ENCODE measurements at regions of chr3 and their contacts with region 1.

Region 1: GRCh38 chr3:27449530-27450150 is 34.5 kb downstream of the SLC4A7 start:
- DNase-seq: no peak

Region 2: GRCh38 chr3:27357665-27358258 is 91.9 kb before region 1 on chr3:
- intact Hi-C with region 1: no loop called
- DNase-seq: no peak

Region 3: DNA sequence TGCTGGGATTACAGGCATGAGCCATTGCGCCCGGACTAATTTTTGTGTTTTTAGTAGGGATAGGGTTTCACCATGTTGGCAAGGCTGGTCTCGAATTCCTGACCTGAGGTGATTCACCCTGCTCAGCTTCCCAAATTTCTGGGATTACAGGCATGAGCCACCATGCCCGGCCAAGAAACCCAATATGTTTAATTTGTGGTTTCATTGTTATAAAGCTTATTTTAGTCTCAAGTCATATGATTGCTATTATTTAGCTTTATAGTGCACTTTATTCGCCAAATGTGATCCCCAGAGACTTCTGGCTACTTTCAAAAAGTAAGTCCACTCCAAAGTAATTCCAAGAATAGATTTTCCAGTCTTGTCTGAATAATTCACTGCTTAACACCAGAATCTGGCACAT is 53.9 kb after region 1 on chr3:
- intact Hi-C with region 1: loop called in 1 of 2 experiments (anchors 2 kb)
- DNase-seq: no peak

Region 4: DNA sequence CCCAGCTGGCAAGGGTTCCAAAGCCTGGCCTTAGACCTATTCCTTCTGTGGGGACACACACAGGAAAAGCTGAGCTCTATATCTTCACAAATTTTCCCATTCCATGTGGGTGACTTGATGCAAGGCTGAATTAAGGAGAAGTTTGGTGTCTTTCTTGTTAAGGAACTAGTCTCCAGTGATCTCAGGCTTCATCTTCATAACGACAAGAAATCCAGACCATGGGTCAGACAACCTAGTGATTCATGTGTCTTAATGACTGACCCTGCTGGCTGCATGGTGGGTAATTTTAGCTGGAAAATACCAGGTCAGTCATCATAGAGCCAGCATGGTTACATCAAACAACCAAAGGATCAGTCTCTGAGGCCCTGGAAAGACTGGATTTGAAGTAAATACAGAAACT is 147.3 kb after region 1 on chr3:
- intact Hi-C with region 1: no loop called
- DNase-seq: no peak